ENCODE measurements at regions of chr1 and their contacts with region 1.

Region 1: GRCh38 chr1:152052606-152053005 is 15.8 kb upstream of the S100A11 start:
- DNase-seq: peak; percentile 77 to 90 (median 85)
- H3K4me3 ChIP-seq: no peak overlapping the region
- H3K27ac ChIP-seq: no peak overlapping the region
- H3K4me1 ChIP-seq: peaks cover 4% of the 10 kb centered on the region
- H3K27me3 ChIP-seq: no peaks in the 10 kb centered on the region
- CTCF ChIP-seq: peak; percentile 52 to 79 (median 72)
- EP300 ChIP-seq: no peak
- POLR2A ChIP-seq: no peak

Region 2: DNA sequence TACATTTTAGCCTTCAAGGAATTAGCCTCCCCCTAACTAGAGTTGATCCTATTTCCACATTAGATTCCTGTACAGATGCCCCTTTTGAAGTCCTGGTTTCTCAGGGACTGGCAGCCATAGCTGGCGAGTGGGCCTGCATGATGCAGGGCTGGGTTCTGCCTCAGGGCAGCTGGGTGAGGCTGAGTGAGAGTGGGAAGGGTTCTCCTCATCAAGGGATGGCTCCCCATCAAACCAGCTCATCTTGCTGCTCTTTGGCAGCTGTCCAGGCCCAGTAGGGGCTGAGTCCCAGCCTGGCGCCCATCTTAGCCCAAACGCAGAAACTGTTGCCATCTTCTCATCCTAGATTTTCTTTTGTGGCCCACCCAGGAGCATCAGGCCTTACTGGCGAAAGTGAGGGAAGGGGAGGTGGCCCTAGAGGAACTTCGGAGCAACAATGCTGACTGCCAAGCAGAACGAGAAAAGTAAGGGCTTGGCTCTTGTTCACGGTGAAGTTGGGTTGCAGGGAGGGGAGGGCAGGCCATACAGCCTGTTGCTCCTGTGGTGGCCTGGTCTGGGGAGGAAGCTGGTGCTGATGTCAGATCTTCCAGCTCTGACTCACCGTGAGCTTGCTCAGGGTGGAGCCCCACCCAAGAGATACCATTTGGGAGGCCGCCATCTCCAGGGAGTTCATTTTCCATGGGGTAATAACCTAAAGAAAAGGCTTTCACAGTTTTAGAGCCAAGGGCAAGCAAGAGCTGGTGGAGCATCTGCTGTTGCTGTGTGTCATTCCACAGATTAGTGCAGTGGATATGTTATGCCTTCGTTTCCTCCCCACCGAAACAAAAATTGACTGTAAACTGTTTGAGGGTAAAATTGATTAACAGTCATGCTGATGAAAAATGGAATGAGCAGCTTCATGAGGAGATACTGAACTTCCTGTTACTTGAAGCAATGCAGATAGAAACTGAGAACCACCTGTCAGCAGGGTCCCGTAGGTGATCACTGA is 477.8 kb before region 1 on chr1:
- intact Hi-C with region 1: no loop called
- DNase-seq: no peak
- H3K4me3 ChIP-seq: no peak overlapping the region
- H3K27ac ChIP-seq: no peak overlapping the region
- H3K4me1 ChIP-seq: no peaks in the 10 kb centered on the region
- H3K27me3 ChIP-seq: no peaks in the 10 kb centered on the region
- CTCF ChIP-seq: no peak
- EP300 ChIP-seq: no peak
- POLR2A ChIP-seq: no peak

Region 3: GRCh38 chr1:152189657-152190442 is 137.2 kb after region 1 on chr1:
- intact Hi-C with region 1: loop called in 2 of 4 experiments (anchors 5 to 10 kb)
- DNase-seq: peak; percentile 15 to 55 (median 44)
- H3K4me3 ChIP-seq: no peak overlapping the region
- H3K27ac ChIP-seq: no peak overlapping the region
- H3K4me1 ChIP-seq: peaks cover 1% of the 10 kb centered on the region
- H3K27me3 ChIP-seq: no peaks in the 10 kb centered on the region
- CTCF ChIP-seq: peak in 2 of 3 donors; percentile 20 to 32
- EP300 ChIP-seq: no peak
- POLR2A ChIP-seq: no peak

Region 4: DNA sequence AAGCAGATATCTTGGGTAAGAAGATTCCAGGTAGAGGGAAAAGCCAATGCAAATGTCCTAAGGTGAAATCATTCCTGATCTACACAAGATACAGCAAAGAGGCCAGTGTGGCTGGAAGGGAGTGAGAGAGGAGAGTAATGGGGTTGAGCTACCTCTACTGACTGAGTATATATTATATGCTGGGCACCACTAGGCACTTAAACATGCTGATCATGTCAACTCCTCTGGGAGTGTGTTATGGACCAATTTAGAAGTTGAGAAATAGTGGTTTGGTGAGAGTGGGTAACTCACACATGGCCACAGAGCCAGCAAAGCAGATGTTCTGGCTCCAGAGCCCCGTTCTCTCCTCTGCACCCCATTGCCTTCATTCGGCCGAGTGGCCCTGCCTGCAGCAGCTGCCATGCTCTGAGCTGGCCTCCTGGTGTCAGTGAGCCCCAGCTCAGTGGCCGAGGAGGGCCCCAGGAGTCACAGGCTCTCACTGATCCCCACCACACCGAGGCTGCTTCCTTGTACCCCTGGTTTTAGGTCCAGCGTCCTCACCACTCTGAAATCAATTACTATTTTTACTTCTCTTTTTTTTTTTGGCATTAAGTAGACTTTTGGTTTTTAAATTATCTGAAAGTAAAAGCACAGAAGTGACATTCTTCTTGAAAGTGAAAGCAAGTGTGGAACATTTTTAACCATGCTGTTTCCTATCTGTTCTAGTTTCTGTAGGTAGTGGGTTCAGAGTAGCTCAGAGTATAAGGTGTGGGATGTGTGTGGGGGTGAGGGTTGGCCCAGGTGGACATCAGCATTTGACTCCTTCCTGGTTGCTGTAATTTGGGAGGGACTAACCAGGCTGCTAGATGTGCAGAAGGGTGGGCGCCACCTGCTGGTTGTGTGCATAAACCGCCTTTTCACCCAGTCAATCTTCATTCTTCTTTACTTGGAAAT is 407.3 kb after region 1 on chr1:
- intact Hi-C with region 1: loop called in 3 of 4 experiments (anchors 5 kb)
- DNase-seq: peak in 4 of 5 donors; percentile 24 to 64 (median 32)
- H3K4me3 ChIP-seq: no peak overlapping the region
- H3K27ac ChIP-seq: no peak overlapping the region
- H3K4me1 ChIP-seq: no peaks in the 10 kb centered on the region
- H3K27me3 ChIP-seq: no peaks in the 10 kb centered on the region
- CTCF ChIP-seq: no peak
- EP300 ChIP-seq: no peak
- POLR2A ChIP-seq: no peak

Measured in ovary (tissue), 10 donors.